Ascending aorta (tissue), 2 donors: ENCODE measurements at regions of chr16 and their contacts with region 1.

Region 1: DNA sequence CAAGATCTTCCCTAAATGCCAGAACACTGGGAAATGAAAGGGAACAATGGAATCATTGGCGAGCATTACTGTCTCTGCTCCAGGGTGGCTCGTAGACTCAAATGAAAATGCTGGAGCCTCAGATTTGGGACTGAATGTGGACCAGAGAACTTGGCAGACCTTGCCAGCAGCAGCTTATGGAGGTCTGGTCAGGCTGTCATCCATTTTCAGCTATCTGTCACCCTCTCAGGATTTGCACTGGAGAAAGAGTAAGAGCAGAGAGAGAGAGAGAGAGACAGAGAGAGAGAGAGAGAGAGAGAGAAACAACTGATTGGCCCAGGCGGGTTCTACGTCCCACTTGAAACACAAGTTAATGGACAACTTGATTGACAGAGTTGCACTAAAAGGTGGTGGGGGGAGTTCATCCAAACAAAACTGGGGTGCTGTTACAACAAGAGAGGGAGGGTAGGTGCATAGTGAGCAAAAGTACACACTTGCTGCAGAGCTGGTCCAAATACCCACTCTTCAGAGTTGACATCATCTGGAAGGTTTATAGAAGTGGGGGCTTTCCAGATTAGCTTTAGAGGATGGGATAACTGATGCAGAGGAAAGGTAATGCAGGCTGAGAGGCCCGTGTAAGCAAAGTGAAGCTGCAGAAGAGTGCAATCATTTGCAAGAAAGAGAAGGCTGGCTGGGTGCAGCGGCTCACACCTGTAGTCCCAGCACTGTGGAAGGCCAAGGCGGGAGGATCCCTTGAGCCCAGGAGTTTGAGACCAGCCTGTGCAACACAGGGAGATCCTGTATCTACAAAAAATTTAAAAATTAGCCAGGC is 16.5 kb upstream of the NSMCE1 start:
- DNase-seq: no peak
- H3K4me3 ChIP-seq: no peak overlapping the region
- H3K27ac ChIP-seq: no peak overlapping the region
- H3K4me1 ChIP-seq: peaks cover 2 to 10% of the 10 kb centered on the region in 2 donors
- H3K27me3 ChIP-seq: no peaks in the 10 kb centered on the region
- CTCF ChIP-seq: no peak

Region 2: DNA sequence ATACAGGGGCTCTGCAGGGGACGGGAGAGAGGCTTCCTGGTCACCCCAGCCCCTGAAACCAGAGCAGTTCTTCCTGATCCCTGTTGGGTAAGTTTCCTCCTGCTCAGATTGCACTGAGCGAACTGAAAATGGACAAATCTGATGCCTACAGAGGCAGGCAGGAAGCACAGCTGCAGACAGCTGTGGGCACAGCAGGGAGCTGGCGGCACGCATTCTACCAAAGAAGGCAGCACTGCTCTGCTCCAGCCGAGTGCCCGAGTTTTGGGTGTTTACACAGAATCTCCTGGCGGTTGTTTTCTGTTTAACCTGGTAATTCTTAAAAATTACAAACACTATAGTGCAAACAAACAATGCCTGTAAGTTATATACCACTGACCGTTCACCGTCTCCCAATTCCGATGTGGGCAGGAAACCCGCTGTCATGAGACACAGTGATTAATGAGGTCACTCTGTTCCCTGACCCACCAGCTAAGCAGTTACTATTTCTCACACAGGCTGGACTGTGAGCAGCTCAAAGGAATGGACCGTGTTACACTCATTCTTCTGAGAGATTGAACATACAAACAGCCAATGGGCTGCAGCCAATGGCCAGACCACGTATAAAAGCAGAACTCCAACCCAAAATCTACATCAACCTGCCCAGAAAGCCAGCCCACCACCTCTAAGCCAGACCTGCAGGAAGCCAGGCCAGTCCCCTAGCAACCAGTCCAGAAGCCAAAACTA is 42.0 kb before region 1 on chr16:
- intact Hi-C with region 1: loop called (anchors 5 kb)
- DNase-seq: peak; percentile 26 to 85
- H3K4me3 ChIP-seq: peak overlapping the region; percentile 40 to 51
- H3K27ac ChIP-seq: peak overlapping the region; percentile 73 to 90
- H3K4me1 ChIP-seq: peaks cover 21 to 52% of the 10 kb centered on the region in 2 donors
- H3K27me3 ChIP-seq: no peaks in the 10 kb centered on the region
- CTCF ChIP-seq: peak in 1 of 3 experiments; percentile 9

Region 3: DNA sequence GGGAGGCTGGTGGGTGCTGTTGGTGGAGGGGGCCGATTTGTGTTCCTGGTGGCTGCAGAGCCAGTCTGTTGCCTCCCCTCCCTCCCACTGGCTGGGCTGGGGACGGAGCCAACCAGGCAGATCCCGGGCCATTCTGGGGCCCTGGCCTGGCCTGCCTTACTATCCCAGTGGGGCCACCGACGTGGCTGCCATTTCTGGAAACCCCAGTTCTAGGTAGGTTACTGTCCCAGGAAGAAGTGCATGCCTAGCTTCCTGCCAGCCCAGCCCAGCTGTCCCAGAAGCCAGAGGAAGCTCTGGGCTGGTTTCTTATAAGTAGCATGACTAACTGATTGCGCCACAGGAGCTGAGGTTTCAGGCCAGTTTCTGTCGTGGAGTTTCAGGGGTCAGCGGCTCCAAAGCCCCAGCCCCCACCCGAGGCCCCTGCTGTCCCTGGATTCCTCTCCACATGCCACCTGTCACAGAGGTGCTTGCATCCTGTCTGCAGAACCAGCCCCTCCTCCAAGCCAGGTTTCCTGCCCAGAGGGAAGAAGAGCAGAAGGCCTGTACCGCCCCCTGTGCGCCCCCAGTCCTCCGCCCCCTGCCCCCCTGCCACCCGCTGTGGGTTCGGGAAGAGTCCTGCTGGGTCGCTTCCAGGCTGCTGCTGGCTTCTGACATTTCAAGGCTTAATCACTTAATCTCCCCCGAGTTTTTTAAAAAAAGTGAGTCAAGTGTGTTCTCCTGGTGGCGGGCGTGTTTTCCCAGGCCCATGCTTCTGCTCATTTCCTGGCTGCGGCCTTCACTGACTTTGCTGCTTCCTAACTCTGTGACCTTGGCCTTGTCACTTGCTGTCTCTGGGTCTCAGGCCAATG is 41.9 kb after region 1 on chr16:
- intact Hi-C with region 1: no loop called
- DNase-seq: peak; percentile 76 to 95
- H3K4me3 ChIP-seq: no peak overlapping the region
- H3K27ac ChIP-seq: peak overlapping the region; percentile 91
- H3K4me1 ChIP-seq: peaks cover 15 to 21% of the 10 kb centered on the region in 2 donors
- H3K27me3 ChIP-seq: no peaks in the 10 kb centered on the region
- CTCF ChIP-seq: no peak